Common myeloid progenitor, CD34-positive (primary cell): ENCODE measurements at regions of chr6 and their contacts with region 1.

Region 1: GRCh38 chr6:166612471-166612881 is 14.6 kb downstream of the RPS6KA2 start:
- DNase-seq: no peak
- H3K4me3 ChIP-seq: no peak overlapping the region
- H3K27ac ChIP-seq: no peak overlapping the region
- H3K4me1 ChIP-seq: no peaks in the 10 kb centered on the region
- H3K27me3 ChIP-seq: peaks cover 0 to 2% (median 0%) of the 10 kb centered on the region in 5 experiments

Region 2: GRCh38 chr6:166624278-166624677 is 11.8 kb after region 1 on chr6:
- CTCF ChIA-PET with region 1: interaction called, 12 read pairs
- POLR2A ChIA-PET with region 1: no interaction called
- DNase-seq: peak; percentile 27 to 78 (median 69)
- H3K4me3 ChIP-seq: no peak overlapping the region
- H3K27ac ChIP-seq: no peak overlapping the region
- H3K4me1 ChIP-seq: peaks cover 10 to 30% (median 25%) of the 10 kb centered on the region in 4 experiments
- H3K27me3 ChIP-seq: peaks cover 0 to 14% (median 8%) of the 10 kb centered on the region in 5 experiments